Mammary epithelial cell (primary cell): ENCODE measurements at regions of chr6 and their contacts with region 1.

Region 1: DNA sequence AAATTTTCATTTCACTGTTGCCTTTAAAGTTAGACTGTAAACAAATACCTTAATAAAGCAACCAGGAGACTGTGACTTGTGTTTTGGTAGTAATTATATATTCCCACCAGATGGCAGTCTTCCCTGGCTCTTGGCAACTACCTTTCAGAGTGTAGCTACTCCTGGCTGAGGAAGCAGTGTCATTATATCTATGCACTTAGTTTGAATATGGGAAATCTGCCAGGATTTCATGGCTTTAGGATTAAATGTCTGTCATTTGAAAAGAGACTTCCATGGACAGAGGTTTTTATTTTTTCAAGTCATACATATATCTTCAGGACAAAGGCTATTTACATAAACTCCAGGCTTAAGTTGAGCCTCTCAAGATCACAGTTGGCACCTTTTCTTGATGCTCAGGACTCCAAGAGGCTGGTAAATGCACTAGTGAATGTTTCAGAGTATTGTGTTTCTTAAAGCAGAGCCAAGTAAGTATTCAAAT is 160.1 kb downstream of the C6orf58 start:
- DNase-seq: peak; percentile 50
- H3K4me3 ChIP-seq: no peak overlapping the region
- H3K27ac ChIP-seq: no peak overlapping the region
- H3K4me1 ChIP-seq: no peaks in the 10 kb centered on the region
- H3K27me3 ChIP-seq: no peaks in the 10 kb centered on the region
- CTCF ChIP-seq: peak; percentile 51 to 67

Region 2: GRCh38 chr6:127225497-127225896 is 511.6 kb before region 1 on chr6:
- CTCF ChIA-PET with region 1: no interaction called
- dilution Hi-C with region 1: no loop called
- in situ Hi-C with region 1: no loop called
- intact Hi-C with region 1: no loop called
- DNase-seq: peak; percentile 32
- H3K4me3 ChIP-seq: no peak overlapping the region
- H3K27ac ChIP-seq: no peak overlapping the region
- H3K4me1 ChIP-seq: no peaks in the 10 kb centered on the region
- H3K27me3 ChIP-seq: no peaks in the 10 kb centered on the region
- CTCF ChIP-seq: no peak

Region 3: GRCh38 chr6:127516666-127517273 is 220.3 kb before region 1 on chr6:
- CTCF ChIA-PET with region 1: no interaction called
- dilution Hi-C with region 1: no loop called
- in situ Hi-C with region 1: no loop called
- intact Hi-C with region 1: no loop called
- DNase-seq: peak; percentile 40
- H3K4me3 ChIP-seq: peak overlapping the region in 2 of 3 experiments; percentile 41 to 48
- H3K27ac ChIP-seq: no peak overlapping the region
- H3K4me1 ChIP-seq: peaks cover 15% of the 10 kb centered on the region
- H3K27me3 ChIP-seq: peaks cover 36% of the 10 kb centered on the region
- CTCF ChIP-seq: peak; percentile 79 to 90

Region 4: DNA sequence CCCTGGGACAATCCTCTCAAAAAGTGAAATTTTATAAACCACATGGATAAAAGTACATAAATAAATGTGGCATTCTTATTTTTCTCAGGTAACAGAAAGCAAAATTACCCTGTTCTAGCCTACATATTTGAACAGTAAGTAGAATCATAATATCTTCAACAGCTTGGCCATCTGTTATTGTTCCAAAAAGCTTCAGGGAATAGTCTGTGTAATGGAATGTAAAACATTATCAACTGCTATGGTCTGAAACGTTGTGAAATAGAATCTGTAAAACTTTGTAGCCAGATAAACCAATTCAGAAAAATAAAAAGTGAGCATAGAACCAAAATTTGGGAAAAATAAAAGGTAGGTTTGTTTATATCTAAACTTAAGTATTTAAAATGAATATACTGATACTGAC is 49.1 kb after region 1 on chr6:
- CTCF ChIA-PET with region 1: no interaction called
- dilution Hi-C with region 1: no loop called
- in situ Hi-C with region 1: no loop called
- intact Hi-C with region 1: no loop called
- DNase-seq: no peak
- H3K4me3 ChIP-seq: no peak overlapping the region
- H3K27ac ChIP-seq: no peak overlapping the region
- H3K4me1 ChIP-seq: no peaks in the 10 kb centered on the region
- H3K27me3 ChIP-seq: peaks cover 1% of the 10 kb centered on the region
- CTCF ChIP-seq: no peak

Region 5: GRCh38 chr6:127855542-127856159 is 118.6 kb after region 1 on chr6:
- CTCF ChIA-PET with region 1: no interaction called
- dilution Hi-C with region 1: no loop called
- in situ Hi-C with region 1: no loop called
- intact Hi-C with region 1: no loop called
- DNase-seq: no peak
- H3K4me3 ChIP-seq: no peak overlapping the region
- H3K27ac ChIP-seq: no peak overlapping the region
- H3K4me1 ChIP-seq: no peaks in the 10 kb centered on the region
- H3K27me3 ChIP-seq: no peaks in the 10 kb centered on the region
- CTCF ChIP-seq: peak; percentile 3 to 44

Region 6: DNA sequence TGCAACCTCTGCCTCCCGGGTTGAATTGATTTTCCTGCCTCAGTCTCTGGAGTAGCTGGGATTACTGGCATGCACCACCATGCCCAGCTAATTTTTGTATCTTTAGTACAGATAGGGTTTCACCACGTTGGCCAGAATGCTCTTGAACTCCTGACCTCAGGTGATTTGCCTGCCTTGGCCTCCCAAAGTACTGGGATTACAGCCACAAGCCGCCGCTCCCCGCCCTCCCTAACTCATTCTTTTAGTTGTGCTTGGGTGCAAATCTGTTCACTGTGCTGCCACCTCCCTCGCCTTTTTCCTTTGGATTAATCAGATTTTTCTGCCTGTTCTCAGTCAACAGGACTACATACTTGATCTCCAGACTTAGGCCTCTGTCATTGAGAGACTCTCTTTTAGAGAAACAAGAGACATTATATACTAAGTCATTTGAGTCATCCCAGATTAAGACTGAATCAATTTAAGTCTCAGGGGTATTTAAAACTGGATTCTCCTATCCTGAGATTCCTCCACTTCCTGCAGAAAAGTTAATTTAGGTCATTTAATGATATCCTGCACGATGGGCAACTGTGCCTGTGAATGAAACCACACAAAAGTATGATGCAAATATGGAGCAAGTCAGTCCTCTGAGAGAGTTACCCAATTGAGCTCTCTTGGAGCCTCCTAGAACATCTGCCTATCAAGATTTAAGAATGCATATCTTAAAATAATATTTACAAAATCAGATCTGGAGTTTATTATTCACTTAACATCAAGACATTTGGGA is 299.9 kb after region 1 on chr6:
- CTCF ChIA-PET with region 1: no interaction called
- dilution Hi-C with region 1: no loop called
- in situ Hi-C with region 1: no loop called
- intact Hi-C with region 1: loop called (anchors 5 kb)
- DNase-seq: no peak
- H3K4me3 ChIP-seq: no peak overlapping the region
- H3K27ac ChIP-seq: no peak overlapping the region
- H3K4me1 ChIP-seq: no peaks in the 10 kb centered on the region
- H3K27me3 ChIP-seq: no peaks in the 10 kb centered on the region
- CTCF ChIP-seq: no peak

Region 7: GRCh38 chr6:128731249-128732165 is 994.5 kb after region 1 on chr6:
- CTCF ChIA-PET with region 1: interaction called, 5 read pairs
- dilution Hi-C with region 1: no loop called
- in situ Hi-C with region 1: loop called (anchors 5 to 25 kb)
- intact Hi-C with region 1: loop called (anchors 1 kb)
- DNase-seq: peak; percentile 47
- H3K4me3 ChIP-seq: no peak overlapping the region
- H3K27ac ChIP-seq: no peak overlapping the region
- H3K4me1 ChIP-seq: no peaks in the 10 kb centered on the region
- H3K27me3 ChIP-seq: no peaks in the 10 kb centered on the region
- CTCF ChIP-seq: peak; percentile 66 to 78

Region 8: DNA sequence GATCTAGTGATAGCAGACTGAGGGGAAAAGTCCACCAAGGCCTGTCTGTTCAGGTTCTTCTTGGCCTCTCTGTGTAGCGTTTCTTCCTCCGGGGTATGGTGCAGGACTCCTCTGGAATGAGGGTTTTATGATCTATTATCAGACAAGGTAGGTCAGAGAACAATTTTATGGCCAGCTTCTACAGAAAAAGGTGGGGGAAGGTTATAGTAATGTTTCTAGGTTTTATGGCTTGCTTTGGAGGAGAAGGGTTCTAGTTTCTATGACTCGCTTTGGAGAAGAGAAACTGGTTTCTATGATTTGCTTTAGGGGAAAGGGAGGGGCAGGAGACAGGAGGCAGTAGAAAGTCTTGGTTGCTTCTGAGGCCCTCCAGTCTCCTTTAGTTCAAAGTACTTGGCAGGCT is 1001.1 kb after region 1 on chr6:
- CTCF ChIA-PET with region 1: no interaction called
- dilution Hi-C with region 1: no loop called
- in situ Hi-C with region 1: loop called (anchors 5 to 25 kb)
- intact Hi-C with region 1: no loop called
- DNase-seq: peak; percentile 47
- H3K4me3 ChIP-seq: no peak overlapping the region
- H3K27ac ChIP-seq: no peak overlapping the region
- H3K4me1 ChIP-seq: peaks cover 19% of the 10 kb centered on the region
- H3K27me3 ChIP-seq: no peaks in the 10 kb centered on the region
- CTCF ChIP-seq: no peak

Region 9: GRCh38 chr6:129370268-129370916 is 1633.3 kb after region 1 on chr6:
- CTCF ChIA-PET with region 1: no interaction called
- dilution Hi-C with region 1: no loop called
- in situ Hi-C with region 1: no loop called
- intact Hi-C with region 1: loop called (anchors 1 kb)
- DNase-seq: peak; percentile 24
- H3K4me3 ChIP-seq: no peak overlapping the region
- H3K27ac ChIP-seq: no peak overlapping the region
- H3K4me1 ChIP-seq: no peaks in the 10 kb centered on the region
- H3K27me3 ChIP-seq: no peaks in the 10 kb centered on the region
- CTCF ChIP-seq: peak; percentile 66 to 78